ENCODE measurements at regions of chr16 and their contacts with region 1.

Region 1: DNA sequence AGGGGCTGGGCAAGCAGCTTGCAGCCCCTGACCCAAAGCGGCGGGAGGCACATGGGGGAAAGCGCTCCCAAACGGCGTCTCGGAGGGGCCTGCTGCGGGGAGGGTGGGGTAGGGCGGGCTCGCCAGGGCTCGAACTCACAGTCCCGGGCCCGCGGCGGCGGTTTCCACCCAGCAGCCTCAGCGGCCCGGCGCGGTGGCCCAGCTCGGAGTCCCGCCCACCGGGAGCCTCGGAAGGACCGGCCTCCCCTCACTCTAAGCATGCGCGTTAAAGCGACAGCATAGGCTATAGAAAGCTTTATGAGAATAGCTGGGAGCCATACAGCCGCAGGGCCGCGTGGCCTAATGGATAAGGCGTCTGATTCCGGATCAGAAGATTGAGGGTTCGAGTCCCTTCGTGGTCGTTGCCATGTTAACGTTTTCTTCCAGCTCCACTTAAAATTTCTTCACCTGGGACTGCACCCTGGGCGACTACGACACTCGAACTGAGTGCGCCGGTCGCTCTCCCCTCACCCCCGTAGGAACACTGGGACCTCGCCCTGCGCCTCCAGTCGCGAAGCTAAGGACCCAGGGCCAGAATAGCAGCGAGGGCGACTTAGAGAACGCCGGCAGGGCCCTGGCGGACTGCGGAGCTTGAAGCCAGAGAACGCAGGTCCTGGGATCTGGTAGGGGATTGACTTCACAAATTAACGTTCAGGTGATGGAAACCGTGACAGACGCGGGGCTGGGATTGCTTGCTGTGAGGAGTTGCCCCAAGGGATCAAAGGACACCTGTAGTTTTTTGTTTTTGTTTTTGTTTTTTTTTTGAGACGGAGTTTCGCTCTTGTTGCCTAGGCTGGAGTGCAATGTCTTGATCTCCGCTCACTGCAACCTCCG is 15.8 kb downstream of the ZNF213 start:
- DNase-seq: peak; percentile 96
- H3K4me3 Mint-ChIP-seq: peak overlapping the region; percentile 85
- H3K27ac Mint-ChIP-seq: peak overlapping the region; percentile 82
- H3K4me1 Mint-ChIP-seq: peaks cover 30% of the 10 kb centered on the region
- H3K27me3 Mint-ChIP-seq: peaks cover 14% of the 10 kb centered on the region

Region 2: DNA sequence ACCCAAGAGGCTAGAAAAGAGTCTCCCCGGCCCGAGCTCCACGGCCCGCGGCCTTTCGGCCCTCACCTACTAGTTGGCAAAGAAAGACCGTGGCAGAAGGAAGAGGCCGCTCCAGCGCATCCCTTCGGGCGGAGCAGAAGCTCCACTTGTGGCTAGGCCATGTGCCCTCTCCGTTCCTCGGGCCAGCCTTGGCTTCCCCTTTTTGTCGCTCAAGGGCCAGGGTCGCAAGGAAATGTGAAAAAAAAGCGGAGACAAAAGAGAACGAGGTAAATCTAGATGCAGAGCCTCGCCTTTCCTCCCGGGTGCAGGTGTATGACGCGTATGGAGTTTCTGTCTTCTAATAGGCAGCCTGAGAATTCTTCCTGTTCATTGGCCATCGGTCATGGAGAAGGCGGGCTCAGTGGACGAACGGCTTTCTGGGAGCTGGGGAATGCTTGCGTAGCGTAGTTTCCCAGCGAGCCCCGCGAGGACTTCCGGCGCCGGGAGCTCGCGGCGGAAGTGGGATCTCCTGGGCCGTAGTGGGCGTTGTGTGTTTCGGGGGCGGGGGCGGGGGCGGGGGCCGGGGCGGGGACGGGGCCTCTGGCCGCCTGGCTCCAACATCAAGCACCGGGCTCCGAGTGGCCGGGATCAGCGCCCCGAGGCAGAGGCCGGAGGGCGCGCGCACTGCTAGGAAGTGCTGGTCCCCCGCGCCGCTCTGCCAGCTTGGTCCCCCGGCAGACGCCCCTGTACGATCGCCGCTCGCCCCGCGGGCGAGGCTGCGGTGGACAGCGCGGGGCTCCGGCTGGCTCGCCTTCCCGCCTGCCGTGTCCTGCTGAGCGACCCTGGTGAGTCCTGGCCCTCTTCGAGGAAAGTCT is 15.8 kb before region 1 on chr16 and contains the start of gene ZNF213:
- intact Hi-C with region 1: loop called (anchors 1 kb)
- DNase-seq: peak; percentile 93
- H3K4me3 Mint-ChIP-seq: peak within 1 kb of the TSS; percentile 98
- H3K27ac Mint-ChIP-seq: peak within 1 kb of the TSS; percentile 96
- H3K4me1 Mint-ChIP-seq: peaks cover 19% of the 10 kb centered on the region
- H3K27me3 Mint-ChIP-seq: no peaks in the 10 kb centered on the region
- total RNA-seq, gene ZNF213: 9.1 and 9.3 TPM in 2 replicates

Region 3: DNA sequence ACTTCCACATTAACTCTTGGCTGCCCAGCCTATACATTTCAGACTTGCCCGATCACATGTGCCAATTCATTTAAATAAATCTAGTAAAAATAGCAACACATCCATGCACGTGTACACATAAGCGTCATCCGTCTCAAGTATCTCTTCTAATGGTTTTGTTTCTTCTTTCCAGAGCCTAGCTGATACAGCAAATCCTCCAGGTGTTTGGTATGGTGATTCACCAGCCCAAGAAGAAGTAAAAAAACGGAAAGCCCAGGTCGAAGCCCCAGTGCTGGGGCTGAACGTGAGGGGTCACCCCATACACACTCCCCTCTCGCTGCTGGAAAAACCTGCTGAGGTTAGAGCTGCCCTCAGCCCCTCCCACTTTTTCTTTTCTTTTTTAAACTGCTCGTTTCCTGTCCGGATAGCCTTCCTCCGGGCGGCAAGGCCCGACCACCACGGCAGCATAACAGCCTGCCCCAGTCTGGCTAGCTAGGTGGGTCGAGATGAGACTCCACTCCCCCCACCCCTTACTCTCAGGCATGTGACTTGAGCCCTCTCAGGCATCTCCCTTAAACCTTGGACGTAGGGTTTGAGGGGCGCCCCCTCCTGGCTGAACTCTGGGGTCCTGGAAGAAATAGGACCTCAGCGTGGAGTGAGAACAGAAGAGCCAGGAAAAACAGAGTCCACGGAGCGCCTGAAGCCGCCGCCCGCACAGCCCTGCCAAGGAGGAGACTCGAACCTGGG is 23.5 kb after region 1 on chr16:
- intact Hi-C with region 1: loop called (anchors 2 kb)
- DNase-seq: no peak
- H3K4me3 Mint-ChIP-seq: peak overlapping the region; percentile 67
- H3K27ac Mint-ChIP-seq: no peak overlapping the region
- H3K4me1 Mint-ChIP-seq: peaks cover 27% of the 10 kb centered on the region
- H3K27me3 Mint-ChIP-seq: peaks cover 76% of the 10 kb centered on the region

Region 4: DNA sequence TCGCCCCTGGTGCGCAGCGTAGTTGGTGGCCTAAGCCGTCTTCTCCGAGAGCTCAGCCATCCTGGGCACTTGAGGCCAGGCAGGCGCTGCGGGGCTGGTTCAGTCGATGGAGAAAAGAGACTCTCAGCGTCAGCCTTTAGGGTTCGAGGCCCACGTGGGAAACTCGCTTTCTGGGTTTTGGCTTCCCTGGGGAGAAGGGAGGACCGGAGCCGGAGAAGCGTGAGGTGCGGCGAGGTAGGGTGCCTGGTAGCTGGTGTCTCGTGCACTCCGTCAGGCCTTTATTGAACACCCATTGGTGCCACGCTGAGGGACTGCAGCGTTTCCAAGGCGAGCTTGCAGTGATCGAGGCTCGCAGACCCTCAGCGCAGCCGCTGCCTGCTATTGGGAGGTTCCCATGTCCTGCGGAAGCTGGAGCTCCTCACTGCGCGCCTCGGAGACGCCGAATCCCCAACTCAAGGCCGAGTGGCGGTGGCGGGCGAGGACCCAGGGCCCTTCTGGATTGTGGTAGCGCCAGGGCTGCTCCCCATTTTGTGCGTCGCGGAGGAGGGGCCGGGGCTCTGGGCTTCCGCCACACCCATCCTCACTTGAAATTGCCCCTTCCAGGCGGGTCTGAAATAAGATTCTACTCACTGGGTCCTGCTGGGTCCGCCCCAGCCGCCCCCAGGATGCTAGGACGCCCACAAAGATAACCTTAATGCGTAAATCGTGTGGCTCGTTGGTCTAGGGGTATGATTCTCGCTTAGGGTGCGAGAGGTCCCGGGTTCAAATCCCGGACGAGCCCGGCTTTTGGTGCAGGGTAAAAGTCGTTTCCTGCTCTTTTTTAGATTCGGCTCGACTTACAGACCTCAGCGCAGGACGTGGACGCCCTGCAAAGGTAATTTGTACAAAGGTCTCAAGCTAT is 38.6 kb after region 1 on chr16:
- intact Hi-C with region 1: loop called (anchors 5 kb)
- DNase-seq: no peak
- H3K4me3 Mint-ChIP-seq: peak overlapping the region; percentile 72
- H3K27ac Mint-ChIP-seq: no peak overlapping the region
- H3K4me1 Mint-ChIP-seq: peaks cover 28% of the 10 kb centered on the region
- H3K27me3 Mint-ChIP-seq: peaks cover 66% of the 10 kb centered on the region

Measured in activated T-helper 2 cell treated with anti-CD3 and anti-CD28 coated beads, Interferon-gamma antibody, Interleukin-2, Interleukin-4, amounts not matched to agents 10 μg/mL and 5 μg/mL and 100 μg/mL, durations not matched to agents 14 hours and 24 hours and 36 hours (primary cell).